Posterior vena cava (tissue), 2 donors: ENCODE measurements at regions of chr4 and their contacts with region 1.

Region 1: DNA sequence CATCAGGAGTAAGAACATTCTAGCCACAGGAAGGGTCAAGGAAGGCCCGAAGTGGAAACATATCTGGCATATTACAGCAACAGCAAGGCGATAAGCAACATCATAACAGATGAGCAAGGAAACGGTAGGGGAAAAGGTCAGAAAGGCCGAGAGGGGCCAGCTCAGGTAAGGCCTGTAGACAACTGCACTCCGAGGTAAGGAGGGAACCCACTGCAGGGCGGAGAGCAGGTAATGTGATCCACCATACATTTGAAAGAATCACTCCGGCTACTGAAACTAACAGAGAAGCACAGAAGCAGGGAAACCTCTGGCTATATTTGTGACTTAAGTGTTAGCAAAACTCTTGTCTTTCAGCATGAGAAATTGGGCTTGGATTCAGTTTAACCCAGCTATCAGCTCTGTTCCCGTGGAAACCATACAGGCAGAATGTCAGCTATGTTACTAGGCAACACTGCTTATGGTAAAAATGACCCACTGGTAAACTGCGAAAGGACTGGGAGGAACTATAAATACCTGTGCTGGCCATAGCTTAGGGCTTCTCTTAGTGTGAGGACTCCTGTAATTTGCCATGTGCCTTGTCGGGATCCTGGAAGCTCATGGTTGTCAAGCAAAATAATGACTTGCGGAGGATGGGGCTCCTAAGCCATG is 31.0 kb downstream of the FRYL start:
- DNase-seq: no peak

Region 2: DNA sequence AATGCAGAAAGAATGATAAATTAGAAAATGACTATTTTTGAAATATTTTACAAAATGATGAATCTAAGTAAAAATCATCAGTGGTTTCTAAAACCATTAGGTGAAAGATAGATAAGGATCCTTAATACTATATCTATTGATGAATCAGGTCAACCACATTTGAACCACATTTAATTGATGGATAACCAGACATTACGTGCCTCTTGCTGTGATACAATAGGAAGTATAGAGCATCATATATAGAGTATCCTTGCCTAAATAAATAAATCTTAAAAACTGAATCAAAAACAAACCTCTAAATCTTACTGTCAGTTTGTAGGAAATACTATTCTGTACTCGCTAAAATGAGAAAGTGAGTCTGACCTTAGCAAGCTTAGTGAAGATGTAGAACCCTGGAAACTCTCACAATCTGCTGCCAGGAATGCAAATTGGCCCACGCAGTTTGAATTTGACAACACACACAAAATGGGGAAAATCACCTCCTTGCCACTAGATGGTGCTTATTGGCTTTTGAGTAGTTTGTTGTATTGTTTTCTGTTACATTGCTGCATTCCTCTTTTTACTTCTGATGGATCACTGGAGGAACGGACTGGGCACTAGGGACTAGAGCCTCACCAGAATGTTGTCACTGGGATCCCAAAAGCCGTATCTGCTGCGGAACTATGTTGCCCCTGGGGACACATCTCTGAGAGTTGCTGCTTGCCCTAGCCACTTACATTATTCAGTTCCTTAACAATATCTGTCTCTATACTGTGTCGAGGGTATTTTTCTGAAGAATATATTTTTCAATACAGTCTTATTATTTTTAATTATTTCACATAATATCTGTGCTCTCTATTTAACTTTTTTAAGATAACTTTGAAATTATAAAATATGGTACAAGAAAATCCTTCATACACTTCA is 433.1 kb before region 1 on chr4:
- intact Hi-C with region 1: no loop called
- DNase-seq: no peak

Region 3: GRCh38 chr4:48979914-48980579 is 231.0 kb after region 1 on chr4:
- intact Hi-C with region 1: loop called in 1 of 2 experiments (anchors 5 kb)
- DNase-seq: no peak